Posterior cingulate gyrus (tissue), 11 donors: ENCODE measurements at regions of chr9 and their contacts with region 1.

Region 1: DNA sequence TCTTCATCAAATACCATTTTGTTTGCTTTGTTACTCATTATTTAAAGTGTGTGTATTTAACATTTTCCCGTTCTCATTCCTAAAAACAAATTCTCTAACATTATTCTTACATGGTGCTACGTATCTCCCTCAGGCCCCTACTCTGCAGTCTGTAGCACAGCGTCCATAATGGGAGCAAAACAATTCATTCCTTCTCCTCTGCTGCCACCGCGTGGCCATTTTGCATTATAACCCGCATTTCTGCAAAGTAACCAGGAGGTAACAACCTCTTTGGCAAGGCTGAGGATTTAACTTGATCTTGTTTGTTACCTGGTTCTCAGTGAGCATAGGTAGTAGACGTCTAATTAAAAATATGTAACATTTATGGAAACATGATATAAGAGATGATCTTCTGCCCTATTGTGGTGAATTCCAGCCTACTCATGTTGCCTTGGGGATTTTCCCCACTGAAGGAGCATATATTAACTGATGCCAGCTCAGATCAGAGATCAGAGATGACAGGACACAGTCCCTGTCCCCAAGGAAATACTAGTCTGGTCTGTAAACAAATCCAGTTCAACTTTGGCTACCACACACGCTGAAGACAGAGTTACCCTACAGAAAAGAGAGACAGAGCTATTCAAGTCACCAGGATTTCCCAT is 10.5 kb downstream of the OR1K1 start:
- DNase-seq: peak; percentile 64 to 96 (median 84)

Region 2: DNA sequence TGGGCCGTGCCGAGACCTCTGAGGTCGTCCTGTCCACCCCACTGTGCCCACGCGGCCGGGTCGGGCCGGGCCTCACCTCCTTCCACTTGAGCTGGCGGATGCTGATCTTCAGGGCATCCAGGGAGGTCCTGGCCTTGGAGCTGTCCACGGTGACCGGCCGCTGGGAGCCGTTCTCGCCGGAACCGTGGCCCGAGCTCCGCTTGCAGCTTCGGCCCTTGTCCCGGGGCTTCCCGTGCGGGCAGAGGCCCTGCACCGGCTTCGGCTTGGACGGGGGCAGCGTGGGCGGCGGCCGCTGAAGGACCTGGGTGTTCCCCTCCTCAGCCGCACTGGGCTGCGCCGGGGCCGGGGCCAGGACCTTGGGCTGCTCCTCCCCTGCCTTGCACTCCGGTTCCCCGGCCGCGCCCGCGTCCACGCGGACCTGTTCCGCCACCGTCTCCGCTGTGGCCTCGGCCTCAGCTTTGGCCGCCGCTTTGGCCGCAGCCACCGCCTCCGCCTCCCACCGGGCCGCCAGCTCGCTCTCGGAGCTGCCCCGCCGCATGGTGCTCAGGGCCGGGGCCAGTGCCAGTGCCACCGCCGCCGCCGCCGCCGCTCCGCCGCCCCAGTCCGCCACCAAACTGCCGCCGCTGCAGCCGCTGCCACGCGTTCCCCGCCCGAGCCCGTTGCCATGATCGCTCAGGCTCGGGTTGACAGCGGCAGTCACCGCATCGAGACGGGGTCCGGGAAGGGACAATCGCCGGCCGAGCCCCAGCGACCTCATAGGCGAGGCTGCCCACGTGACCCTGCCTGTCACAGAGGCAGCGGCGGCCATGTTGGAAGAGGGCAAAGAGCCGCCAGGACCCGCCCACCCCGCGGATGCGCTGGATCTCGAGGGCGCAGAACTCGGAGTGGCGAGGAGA is 717.6 kb before region 1 on chr9 and contains the start of gene TTLL11:
- intact Hi-C with region 1: loop called (anchors 10 kb)
- DNase-seq: peak; percentile 96 to 100 (median 98)

Region 3: DNA sequence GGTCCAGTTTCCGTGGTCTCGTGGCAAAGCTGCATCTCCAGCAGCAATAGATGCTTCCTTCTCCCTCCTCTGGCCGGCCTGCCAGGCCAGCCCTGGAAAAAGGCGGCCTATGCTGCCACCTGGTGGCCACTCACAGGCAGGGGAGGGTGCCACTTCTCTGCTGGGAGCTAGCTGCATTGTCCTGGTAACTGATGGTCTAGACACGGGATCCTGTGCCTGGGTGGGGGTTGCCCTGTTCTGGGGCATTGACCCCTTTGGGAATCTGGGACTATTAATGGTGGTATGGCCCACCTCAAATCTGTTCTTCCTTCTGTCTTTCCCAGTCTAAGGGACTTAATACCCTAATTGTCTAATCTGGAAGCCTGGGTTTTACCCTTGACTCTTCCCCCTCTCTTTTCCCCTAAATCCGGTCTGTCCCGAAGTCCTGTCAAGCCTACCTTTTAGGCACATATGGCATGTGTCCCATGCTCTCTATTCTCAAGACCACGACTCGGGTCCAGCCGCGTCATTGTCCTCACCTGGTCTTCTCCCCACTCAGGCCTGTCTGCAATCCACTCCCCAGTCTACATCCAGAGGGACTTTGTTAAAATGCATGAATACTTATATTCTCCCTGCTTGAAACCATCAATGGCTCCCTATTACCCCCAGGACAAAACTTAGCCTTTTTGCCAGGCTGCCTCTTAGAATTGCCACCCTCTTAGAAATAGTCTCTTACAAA is 459.6 kb before region 1 on chr9:
- intact Hi-C with region 1: loop called (anchors 10 kb)
- DNase-seq: peak; percentile 80 to 99 (median 90)

Region 4: DNA sequence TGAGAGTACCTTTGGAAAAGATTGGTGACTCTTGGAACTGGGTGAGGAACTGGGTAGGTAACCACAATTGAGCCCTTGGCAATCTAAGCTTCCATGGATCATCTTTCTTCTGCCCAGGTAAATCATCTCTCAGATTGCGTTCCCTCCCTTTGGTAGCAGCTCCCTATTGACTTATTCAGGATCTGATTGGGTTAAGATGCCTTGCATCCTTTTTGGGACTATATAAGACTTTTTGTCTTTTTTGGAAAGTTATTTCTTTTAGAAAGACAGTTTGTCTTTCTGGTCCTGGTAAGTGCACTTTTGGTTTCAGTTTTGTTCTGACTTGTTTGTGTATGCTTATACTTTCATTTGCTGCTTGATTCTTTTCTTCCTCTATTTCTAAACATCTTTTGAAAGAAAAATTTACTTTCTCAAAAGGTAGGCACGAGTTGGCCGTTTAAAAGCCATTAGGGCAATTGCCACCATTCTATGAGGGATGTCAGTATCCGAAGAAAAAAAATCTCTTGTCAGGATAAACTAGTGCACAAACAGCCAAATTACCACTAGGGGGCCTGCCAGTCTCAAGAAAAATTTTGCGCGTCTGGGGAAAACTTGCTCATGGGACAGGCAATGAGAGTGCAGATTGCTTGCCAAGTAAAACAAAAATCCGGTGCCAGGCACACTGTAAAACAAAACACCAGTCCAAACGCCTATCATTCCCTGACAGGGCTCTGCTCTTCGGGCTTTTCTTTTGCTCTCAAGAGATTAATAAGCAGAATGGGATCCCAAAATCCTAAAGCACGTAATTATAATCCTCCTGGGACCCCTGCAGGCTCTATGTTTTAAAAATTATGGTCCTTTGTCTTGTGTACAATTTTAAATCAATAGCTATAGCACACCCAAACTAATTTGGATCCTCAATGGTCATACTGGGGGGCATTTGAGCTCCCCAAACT is 345.5 kb before region 1 on chr9:
- intact Hi-C with region 1: loop called (anchors 1 kb)
- DNase-seq: peak; percentile 40 to 93 (median 70)